ENCODE measurements at regions of chr3 and their contacts with region 1.

Region 1: DNA sequence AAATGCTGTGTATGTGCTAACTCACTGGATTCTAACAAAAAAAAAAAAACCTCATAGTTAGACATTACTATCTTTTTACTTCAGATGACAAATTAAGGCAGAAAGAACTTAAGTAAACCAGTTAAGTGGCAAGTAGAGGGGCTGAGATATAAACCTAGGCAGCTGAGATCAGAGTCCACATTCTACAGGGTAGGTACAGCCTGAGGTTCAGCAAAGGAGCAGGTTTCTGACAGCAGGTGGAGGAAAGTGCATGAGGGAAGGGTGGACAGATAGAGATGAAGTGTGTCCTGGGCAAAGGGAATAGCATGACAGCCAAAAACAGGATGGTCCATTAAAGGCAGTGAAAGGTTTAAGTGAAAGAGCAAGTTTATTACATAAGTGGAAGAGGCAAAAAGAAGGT is 329.2 kb downstream of the ULK4 start:
- DNase-seq: peak; percentile 19 to 41
- H3K4me3 ChIP-seq: no peak overlapping the region
- H3K4me3 Mint-ChIP-seq: no peak overlapping the region
- H3K27ac Mint-ChIP-seq: no peak overlapping the region
- H3K4me1 ChIP-seq: no peaks in the 10 kb centered on the region; the same call in 1 of the 2 replicates
- H3K4me1 Mint-ChIP-seq: peaks cover 12% of the 10 kb centered on the region
- H3K27me3 ChIP-seq: no peaks in the 10 kb centered on the region
- H3K27me3 Mint-ChIP-seq: peaks cover 6% of the 10 kb centered on the region
- CTCF ChIP-seq: no peak

Region 2: GRCh38 chr3:41234823-41235721 is 397.6 kb before region 1 on chr3:
- CTCF ChIA-PET with region 1: no interaction called
- POLR2A ChIA-PET with region 1: no interaction called
- intact Hi-C with region 1: no loop called
- DNase-seq: no peak
- H3K4me3 ChIP-seq: no peak overlapping the region
- H3K4me3 Mint-ChIP-seq: no peak overlapping the region
- H3K27ac Mint-ChIP-seq: no peak overlapping the region
- H3K4me1 ChIP-seq: no peaks in the 10 kb centered on the region
- H3K4me1 Mint-ChIP-seq: peaks cover 5% of the 10 kb centered on the region
- H3K27me3 ChIP-seq: no peaks in the 10 kb centered on the region
- H3K27me3 Mint-ChIP-seq: no peaks in the 10 kb centered on the region
- CTCF ChIP-seq: no peak

Region 3: DNA sequence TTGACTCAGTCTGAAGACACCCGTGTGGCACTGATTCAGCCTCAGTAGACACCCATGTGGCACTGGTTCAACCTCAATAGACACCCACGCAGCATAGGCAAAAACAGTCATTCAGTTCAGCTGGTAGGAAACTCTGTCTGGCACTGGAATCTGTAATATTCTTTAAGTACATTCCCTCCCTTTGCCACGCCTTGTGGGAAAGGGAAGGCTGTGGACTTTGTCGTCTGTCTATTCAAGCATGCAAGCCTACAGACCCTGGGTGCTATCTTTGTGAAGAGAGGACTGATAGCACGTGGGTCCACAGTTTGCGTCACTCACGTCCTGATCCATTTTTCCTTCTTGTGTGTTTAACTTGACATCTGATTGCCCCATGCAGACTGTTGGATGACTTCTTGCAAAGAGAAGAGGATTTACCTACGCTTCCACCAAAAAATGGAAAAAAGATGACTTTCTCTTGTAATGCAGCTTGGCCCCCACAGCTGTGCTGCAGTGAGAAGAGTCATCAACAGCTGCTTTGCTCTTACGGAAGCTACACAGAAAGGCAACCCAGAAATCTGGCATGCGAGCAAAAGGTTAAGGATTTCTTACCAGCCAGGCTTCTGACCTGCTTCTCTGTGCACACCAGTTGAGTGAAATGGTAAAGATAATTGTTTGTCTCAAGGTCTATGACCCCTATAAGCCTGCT is 51.1 kb after region 1 on chr3:
- CTCF ChIA-PET with region 1: no interaction called
- POLR2A ChIA-PET with region 1: no interaction called
- intact Hi-C with region 1: loop called (anchors 2 kb)
- DNase-seq: peak; percentile 76 to 88
- H3K4me3 ChIP-seq: no peak overlapping the region
- H3K4me3 Mint-ChIP-seq: peak overlapping the region; percentile 48
- H3K27ac Mint-ChIP-seq: peak overlapping the region; percentile 86
- H3K4me1 ChIP-seq: peaks cover 38% of the 10 kb centered on the region
- H3K4me1 Mint-ChIP-seq: peaks cover 24% of the 10 kb centered on the region
- H3K27me3 ChIP-seq: no peaks in the 10 kb centered on the region
- H3K27me3 Mint-ChIP-seq: no peaks in the 10 kb centered on the region
- CTCF ChIP-seq: no peak